Naive thymus-derived CD4-positive, alpha-beta T cell (primary cell): ENCODE measurements at regions of chr2 and their contacts with region 1.

Region 1: DNA sequence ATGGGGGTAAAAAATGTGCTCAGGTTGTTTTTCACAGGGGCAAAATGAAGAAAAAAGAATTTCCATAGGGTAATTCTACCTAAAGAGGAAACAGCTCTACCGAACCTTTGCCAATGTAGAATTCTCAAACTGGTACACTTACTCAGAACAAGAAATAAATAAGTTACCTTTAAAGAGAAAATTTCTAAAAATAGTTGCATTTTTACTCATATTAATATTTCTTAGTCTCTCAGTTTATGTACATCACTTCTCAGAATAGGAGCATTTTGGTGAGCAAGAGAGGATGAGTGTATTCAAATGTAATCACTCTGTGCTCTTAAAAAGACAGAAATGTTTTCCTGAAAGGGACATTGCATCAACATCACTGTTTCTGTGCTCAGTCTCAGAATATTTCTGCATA is 574.7 kb upstream of the SLC8A1 start:
- DNase-seq: no peak
- ATAC-seq: no peak
- H3K4me3 ChIP-seq: no peak overlapping the region
- H3K4me3 Mint-ChIP-seq: no peak overlapping the region
- H3K27ac ChIP-seq: no peak overlapping the region
- H3K27ac Mint-ChIP-seq: no peak overlapping the region
- H3K4me1 ChIP-seq: no peaks in the 10 kb centered on the region
- H3K4me1 Mint-ChIP-seq: peaks cover 0 to 3% (median 0%) of the 10 kb centered on the region in 7 donors
- H3K27me3 ChIP-seq: no peaks in the 10 kb centered on the region
- H3K27me3 Mint-ChIP-seq: no peaks in the 10 kb centered on the region

Region 2: DNA sequence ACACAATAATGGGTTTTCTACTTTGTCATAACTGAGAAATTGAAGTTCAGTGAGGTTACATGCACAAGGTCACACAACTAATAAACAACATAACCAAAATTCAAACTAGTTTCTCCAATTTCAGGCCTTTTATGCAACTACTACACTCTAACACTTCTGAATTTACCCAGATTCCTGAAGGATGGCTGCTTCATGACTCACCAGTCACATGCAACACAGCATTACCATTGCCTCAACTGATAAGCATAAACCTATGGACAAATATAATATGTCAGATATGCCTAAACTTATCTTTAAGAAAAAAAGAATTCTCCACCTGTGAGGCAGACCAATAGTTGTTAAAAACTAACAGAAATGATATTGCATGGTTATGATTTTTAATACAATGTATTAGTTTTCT is 11.8 kb after region 1 on chr2:
- CTCF ChIA-PET with region 1: no interaction called
- POLR2A ChIA-PET with region 1: no interaction called
- intact Hi-C with region 1: loop called in 1 of 2 experiments (anchors 1 kb)
- DNase-seq: no peak
- ATAC-seq: no peak
- H3K4me3 ChIP-seq: no peak overlapping the region
- H3K4me3 Mint-ChIP-seq: no peak overlapping the region
- H3K27ac ChIP-seq: no peak overlapping the region
- H3K27ac Mint-ChIP-seq: no peak overlapping the region
- H3K4me1 ChIP-seq: no peaks in the 10 kb centered on the region
- H3K4me1 Mint-ChIP-seq: no peaks in the 10 kb centered on the region
- H3K27me3 ChIP-seq: no peaks in the 10 kb centered on the region
- H3K27me3 Mint-ChIP-seq: no peaks in the 10 kb centered on the region

Region 3: GRCh38 chr2:41879235-41879916 is 852.8 kb after region 1 on chr2:
- CTCF ChIA-PET with region 1: no interaction called
- POLR2A ChIA-PET with region 1: no interaction called
- intact Hi-C with region 1: no loop called
- DNase-seq: no peak
- ATAC-seq: no peak
- H3K4me3 ChIP-seq: no peak overlapping the region
- H3K4me3 Mint-ChIP-seq: no peak overlapping the region
- H3K27ac ChIP-seq: no peak overlapping the region
- H3K27ac Mint-ChIP-seq: no peak overlapping the region
- H3K4me1 ChIP-seq: no peaks in the 10 kb centered on the region
- H3K4me1 Mint-ChIP-seq: peaks cover 0 to 10% (median 0%) of the 10 kb centered on the region in 7 donors
- H3K27me3 ChIP-seq: no peaks in the 10 kb centered on the region
- H3K27me3 Mint-ChIP-seq: peaks cover 6 to 19% (median 14%) of the 10 kb centered on the region in 5 donors